ENCODE measurements at regions of chr5 and their contacts with region 1.

Region 1: DNA sequence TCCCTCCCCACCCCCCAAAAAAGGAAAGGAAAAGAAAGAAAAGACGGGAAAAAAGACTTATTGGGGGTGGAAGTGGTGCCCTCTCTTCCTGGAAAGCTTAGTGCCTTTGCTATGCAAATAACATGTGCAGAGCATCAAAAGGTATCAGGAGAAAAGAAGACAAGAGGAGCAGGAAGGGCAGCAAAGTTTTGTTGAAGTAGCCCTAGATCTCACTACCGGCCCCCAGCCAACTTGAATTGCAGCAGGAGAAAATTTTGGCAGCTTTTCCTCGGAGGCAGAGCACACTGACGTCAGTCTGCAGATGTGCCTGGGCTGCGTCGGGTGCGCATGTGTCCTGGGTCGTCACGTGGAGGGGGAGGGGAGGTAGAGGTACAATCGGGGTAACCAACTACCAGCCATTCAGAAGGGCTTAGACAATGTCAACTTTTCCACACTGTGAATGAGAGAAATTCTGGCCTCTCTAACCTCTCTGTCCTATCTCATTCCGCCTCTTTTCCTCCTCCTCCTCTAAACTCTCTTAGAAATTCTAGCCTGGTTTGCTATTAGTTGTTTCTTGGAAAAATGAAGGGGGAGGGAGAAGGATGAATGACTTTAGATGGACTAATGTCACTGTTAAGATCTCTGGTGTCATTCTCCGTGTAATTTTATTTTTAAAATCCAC is at the start of gene ADAMTS6:
- DNase-seq: peak; percentile 61 to 96 (median 75)

Region 2: DNA sequence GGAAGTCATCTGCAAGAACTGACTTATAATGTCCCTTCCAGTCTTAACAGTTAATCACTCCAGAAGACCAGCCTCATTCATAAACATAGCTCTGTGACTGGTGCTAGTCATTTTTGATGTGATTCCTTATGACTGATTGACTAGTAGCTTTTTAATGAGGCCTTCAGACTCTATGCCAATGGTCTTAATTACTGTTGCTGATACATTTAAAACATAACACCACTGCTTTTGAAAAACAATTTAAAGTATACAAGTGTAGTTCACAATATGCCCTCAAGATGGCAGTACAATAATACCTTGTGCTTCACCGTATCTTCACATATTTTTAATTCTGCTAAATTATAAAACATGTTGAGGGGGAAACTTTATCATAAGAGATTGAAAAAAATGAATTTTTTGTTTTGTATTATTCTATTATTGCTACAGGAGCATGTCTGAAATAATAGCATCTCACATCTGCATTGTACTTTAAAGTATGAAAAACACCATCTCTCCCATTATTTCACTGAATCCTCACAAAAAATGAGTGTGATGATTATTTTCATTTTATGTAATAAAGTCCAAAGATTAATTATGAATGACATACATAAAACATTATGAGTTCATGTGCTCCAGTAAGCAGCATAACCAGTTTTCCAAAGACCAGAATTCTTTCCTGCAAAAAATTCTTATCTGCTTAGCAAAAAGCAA is 846.6 kb before region 1 on chr5:
- intact Hi-C with region 1: loop called (anchors 10 kb)
- DNase-seq: no peak

Region 3: GRCh38 chr5:64811050-64811640 is 670.6 kb before region 1 on chr5:
- intact Hi-C with region 1: loop called (anchors 1 kb)
- DNase-seq: no peak

Region 4: GRCh38 chr5:64958757-64959391 is 522.9 kb before region 1 on chr5:
- intact Hi-C with region 1: loop called (anchors 2 kb)
- DNase-seq: no peak

Region 5: DNA sequence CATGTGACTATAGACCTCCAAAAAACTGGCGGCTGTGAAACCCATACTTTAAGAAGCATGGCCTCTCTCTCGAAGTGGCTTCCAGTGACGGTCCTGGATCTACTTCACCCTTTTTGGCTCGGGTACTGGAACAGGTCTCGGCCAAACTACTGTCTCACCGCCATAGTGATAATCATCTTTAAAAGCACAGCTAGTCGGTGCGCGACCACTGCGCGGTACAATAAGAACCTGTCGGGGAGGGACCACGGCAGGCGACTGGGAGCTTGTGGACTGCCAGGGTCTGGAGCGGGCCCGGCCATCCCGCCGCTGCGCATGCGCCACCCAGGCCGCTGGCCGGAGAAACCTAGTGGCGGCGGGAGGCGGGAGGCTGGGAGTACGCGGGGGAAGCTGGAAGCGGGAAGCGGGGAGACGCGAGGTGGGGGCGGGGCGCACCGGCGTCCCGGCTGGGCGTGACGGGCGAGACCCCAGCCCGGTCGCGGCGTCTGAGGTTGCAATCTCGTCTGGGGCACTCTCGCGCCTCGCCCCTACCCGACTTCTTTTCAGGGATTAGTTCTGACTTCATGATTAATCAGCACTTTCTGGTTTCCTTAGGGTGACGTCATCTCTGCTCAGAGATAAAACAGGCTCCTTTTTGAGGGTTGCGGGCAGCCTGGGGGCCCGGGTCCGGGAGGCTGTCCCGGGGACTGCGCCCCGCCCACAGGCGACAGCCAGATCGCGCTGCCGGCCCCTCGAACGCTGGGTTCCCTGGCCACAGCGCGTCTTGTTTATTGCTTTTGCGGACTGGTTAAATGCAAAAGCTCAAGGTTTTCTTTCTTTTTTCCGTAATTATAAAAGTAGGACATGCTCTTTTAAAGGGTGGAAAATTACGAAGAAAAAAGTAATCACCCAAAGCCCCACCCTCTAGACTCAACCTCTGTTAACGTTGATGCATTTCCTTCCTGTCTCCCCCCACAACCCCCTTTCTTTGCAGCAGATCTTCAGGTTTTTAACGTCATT is 446.3 kb before region 1 on chr5:
- intact Hi-C with region 1: loop called (anchors 5 kb)
- DNase-seq: peak; percentile 80 to 98 (median 86)

Region 6: GRCh38 chr5:65102828-65103711 is 378.7 kb before region 1 on chr5:
- intact Hi-C with region 1: loop called (anchors 10 kb)
- DNase-seq: peak in 8 of 10 donors; percentile 19 to 91 (median 47)